ENCODE measurements at regions of chr11 and their contacts with region 1.

Region 1: DNA sequence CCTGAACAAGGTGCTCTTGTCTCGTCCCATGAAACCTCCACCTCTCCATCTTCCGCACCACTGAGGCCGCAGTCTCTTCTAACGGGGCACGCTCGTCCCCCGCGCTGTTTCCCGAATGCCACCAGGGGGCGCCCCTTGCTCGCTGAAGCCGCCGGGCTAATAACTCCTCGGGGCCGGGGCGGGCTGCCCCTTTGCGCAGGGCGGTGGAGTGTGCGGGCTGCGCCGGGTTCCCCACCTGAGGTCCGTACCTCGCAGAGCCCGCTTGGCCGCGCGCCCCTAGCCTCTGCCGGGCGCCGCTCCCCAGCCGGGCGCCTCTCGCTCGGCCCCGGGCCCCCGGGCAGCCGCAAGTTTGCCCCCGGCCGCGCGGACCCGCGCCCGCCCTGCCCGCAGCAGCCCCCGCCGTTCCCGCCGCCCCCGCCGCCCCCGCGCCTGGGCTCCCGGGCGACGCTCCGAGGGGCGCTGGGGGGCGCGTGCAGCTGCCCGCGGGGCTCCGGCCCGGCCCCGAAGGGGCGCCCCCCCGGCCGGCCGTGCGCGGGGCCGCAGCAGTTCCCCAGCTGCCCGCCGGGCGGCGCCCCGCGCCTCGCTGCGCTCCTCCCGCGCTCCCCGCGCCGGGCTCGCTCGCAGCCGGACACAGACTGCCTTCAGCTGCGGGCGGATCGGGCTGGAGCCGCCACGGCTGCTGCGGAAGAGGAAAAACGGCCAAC is at the start of gene GRIK4:
- DNase-seq: peak; percentile 92
- ATAC-seq: peak; percentile 87
- H3K4me3 Mint-ChIP-seq: peak within 1 kb of the TSS; percentile 61
- H3K27ac Mint-ChIP-seq: no peak within 1 kb of the TSS
- H3K4me1 Mint-ChIP-seq: peaks cover 11% of the 10 kb centered on the region
- H3K27me3 Mint-ChIP-seq: peaks cover 25% of the 10 kb centered on the region
- CTCF ChIP-seq: peak; percentile 92
- total RNA-seq, gene GRIK4: 2.9 to 3.6 TPM (median 3.3 TPM) in 3 replicates

Region 2: DNA sequence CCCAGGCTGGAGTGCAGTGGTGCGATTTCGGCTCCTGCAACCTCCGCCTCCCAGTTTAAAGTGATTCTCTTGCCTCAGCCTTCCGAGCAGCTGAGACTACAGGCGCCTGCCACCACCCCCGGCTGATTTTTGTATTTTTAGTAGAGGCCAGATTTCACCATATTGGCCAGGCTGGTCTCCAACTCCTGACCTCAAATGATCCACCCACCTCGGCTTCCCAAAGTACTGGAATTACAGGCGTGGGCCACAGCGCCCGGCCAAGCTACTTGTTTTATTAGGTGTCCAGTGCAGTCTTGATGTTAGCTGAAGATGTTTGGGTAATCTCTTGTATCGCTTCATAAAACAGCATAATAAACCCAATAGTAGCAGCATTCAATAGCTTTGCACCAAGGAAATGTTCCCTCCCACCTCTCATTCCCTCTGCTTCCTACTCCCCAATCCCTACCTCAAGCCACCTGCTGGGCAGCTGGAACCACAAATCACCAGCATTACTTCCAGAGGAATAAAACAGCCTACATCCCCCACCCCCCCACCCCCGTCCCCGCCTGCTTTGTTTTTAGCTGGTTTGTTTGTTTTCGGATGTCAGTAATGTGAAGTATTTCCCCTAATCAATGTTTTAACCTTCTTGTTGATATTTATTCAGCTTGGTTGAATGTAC is 10.7 kb before region 1 on chr11:
- CTCF ChIA-PET with region 1: interaction called, 12 read pairs
- POLR2A ChIA-PET with region 1: no interaction called
- DNase-seq: no peak
- ATAC-seq: peak; percentile 41; the same call in 1 of the 2 replicates
- H3K4me3 Mint-ChIP-seq: no peak overlapping the region
- H3K27ac Mint-ChIP-seq: peak overlapping the region; percentile 21; the same call in 1 of the 2 replicates
- H3K4me1 Mint-ChIP-seq: peaks cover 65% of the 10 kb centered on the region
- H3K27me3 Mint-ChIP-seq: no peaks in the 10 kb centered on the region
- CTCF ChIP-seq: no peak

Region 3: GRCh38 chr11:120527111-120527761 is 16.0 kb after region 1 on chr11:
- CTCF ChIA-PET with region 1: interaction called, 21 read pairs
- POLR2A ChIA-PET with region 1: interaction called, 3 read pairs
- DNase-seq: peak; percentile 86
- ATAC-seq: peak; percentile 91
- H3K4me3 Mint-ChIP-seq: peak overlapping the region; percentile 25; the same call in 1 of the 2 replicates
- H3K27ac Mint-ChIP-seq: peak overlapping the region; percentile 89
- H3K4me1 Mint-ChIP-seq: peaks cover 48% of the 10 kb centered on the region
- H3K27me3 Mint-ChIP-seq: no peaks in the 10 kb centered on the region; the same call in 1 of the 2 replicates
- CTCF ChIP-seq: no peak

Measured in WTC11 (cell line).